ENCODE measurements at regions of chr12 and their contacts with region 1.

Region 1: GRCh38 chr12:102740141-102740955 is 176.7 kb downstream of the PAH start:
- DNase-seq: no peak
- ATAC-seq: peak; percentile 64
- H3K4me3 ChIP-seq: no peak overlapping the region
- H3K27ac ChIP-seq: no peak overlapping the region
- H3K4me1 ChIP-seq: peaks cover 1% of the 10 kb centered on the region
- H3K27me3 ChIP-seq: no peaks in the 10 kb centered on the region
- CTCF ChIP-seq: peak; percentile 17 to 64 (median 37); a peak in 3 of 6 replicates
- EP300 ChIP-seq: no peak
- POLR2A ChIP-seq: no peak
- RAD21 ChIP-seq: peak; percentile 74

Region 2: GRCh38 chr12:102095675-102096263 is 644.6 kb before region 1 on chr12:
- CTCF ChIA-PET with region 1: interaction called, 54 read pairs
- POLR2A ChIA-PET with region 1: no interaction called
- RAD21 ChIA-PET with region 1: interaction called, 6 read pairs
- SMC1A ChIA-PET with region 1: interaction called, 32 read pairs
- in situ Hi-C with region 1: loop called (anchors 10 kb)
- intact Hi-C with region 1: loop called (anchors 1 kb)
- DNase-seq: peak; percentile 4
- ATAC-seq: peak; percentile 92
- H3K4me3 ChIP-seq: no peak overlapping the region
- H3K27ac ChIP-seq: no peak overlapping the region
- H3K4me1 ChIP-seq: peaks cover 10% of the 10 kb centered on the region
- H3K27me3 ChIP-seq: no peaks in the 10 kb centered on the region
- CTCF ChIP-seq: peak; percentile 48 to 67 (median 51); a peak in 4 of 6 replicates
- EP300 ChIP-seq: no peak
- POLR2A ChIP-seq: no peak
- RAD21 ChIP-seq: peak; percentile 69

Region 3: GRCh38 chr12:102300824-102301461 is 439.4 kb before region 1 on chr12:
- CTCF ChIA-PET with region 1: interaction called, 21 read pairs
- POLR2A ChIA-PET with region 1: no interaction called
- RAD21 ChIA-PET with region 1: interaction called, 11 read pairs
- SMC1A ChIA-PET with region 1: interaction called, 24 read pairs
- in situ Hi-C with region 1: no loop called
- intact Hi-C with region 1: loop called (anchors 2 kb)
- DNase-seq: peak; percentile 61
- ATAC-seq: peak; percentile 98
- H3K4me3 ChIP-seq: no peak overlapping the region
- H3K27ac ChIP-seq: no peak overlapping the region
- H3K4me1 ChIP-seq: no peaks in the 10 kb centered on the region
- H3K27me3 ChIP-seq: no peaks in the 10 kb centered on the region
- CTCF ChIP-seq: peak; percentile 41 to 47 (median 42); a peak in 4 of 6 replicates
- EP300 ChIP-seq: no peak
- POLR2A ChIP-seq: no peak
- RAD21 ChIP-seq: peak; percentile 57

Region 4: DNA sequence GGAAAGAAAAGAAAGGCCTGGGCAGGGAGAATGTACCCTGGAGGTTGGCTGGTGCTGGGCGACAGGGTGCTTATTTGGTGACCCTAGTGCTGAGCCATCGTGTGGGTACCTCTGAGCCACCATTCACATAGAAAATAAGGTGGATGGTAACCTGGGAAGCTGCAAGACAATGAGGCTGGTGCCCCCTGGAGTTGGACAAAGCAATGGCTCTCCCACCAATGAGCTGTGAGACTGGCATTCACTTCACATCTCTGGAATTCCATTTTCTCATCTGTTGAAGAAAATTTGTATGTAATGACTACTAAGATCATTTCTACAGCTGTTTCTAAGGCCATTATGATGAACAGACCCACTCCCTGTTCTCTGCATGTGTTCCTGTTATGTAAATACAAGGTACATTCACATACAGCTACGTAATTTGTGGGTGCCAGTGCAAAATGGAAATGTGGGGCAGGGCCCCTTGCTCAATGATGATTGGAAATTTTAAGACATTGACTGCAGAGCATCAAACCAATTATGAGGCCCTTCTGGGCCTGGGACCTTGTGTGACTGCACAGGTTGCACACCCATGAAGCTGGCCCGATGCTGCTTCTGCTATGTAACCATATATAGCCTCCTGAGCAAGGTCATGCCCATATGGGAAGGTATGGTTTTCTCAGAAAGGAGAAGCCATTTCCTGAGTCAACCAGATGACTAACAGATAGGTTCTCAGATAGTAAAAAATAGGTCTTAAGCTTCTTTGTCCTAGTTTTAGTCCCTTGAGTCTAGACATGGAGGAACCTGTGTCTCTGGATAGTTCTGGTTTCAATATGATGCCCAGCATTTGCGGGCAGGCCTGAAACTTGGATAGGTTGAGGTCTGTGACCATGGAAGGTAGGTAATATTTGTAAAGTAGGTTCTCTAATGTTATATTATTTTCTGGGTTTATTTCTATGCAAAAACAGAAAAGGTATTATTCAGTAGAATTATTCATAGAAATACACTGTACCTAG is 196.6 kb before region 1 on chr12:
- CTCF ChIA-PET with region 1: interaction called, 17 read pairs
- POLR2A ChIA-PET with region 1: no interaction called
- RAD21 ChIA-PET with region 1: interaction called, 7 read pairs
- SMC1A ChIA-PET with region 1: interaction called, 12 read pairs
- in situ Hi-C with region 1: no loop called
- intact Hi-C with region 1: no loop called
- DNase-seq: no peak
- ATAC-seq: peak; percentile 80
- H3K4me3 ChIP-seq: no peak overlapping the region
- H3K27ac ChIP-seq: no peak overlapping the region
- H3K4me1 ChIP-seq: peaks cover 6% of the 10 kb centered on the region
- H3K27me3 ChIP-seq: no peaks in the 10 kb centered on the region
- CTCF ChIP-seq: peak; percentile 42 to 46 (median 45); a peak in 5 of 6 replicates
- EP300 ChIP-seq: no peak
- POLR2A ChIP-seq: no peak
- RAD21 ChIP-seq: peak; percentile 62

Region 5: DNA sequence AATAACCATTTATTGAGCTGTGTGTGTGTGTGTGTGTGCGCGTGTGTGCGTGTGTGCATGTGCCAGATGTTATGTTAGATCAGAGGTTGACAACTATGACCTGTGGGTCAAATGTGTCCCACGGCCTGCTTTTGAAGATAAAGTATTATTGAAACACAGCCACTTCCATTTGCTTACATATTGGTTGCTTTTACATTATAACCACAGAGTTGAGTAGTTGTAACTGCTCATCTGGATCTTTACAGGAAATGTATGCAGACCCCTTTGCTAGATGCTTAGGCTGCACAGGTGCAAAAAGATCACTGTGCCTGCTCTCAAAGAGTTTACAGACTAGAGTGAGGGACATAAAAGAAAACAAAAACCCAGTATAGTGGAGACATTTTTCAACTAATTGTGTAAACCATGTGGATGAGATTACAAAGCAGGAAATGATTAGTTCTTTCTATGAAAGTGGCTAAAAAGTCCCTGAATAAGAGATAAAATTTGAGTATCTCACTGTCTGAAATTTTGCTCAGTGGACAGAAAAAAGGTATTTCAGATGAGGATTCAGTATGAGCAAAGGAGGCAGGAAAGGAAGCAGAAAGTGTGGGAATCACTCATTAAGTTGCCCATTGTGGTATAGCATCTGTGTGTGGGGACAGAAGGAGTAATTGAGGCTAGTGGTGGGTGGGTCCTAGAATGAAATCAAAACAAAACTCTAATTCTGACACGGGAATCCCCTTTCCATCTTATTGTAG is 11.7 kb before region 1 on chr12:
- CTCF ChIA-PET with region 1: interaction called, 23 read pairs
- POLR2A ChIA-PET with region 1: interaction called, 3 read pairs
- RAD21 ChIA-PET with region 1: interaction called, 13 read pairs
- SMC1A ChIA-PET with region 1: interaction called, 12 read pairs
- in situ Hi-C with region 1: no loop called
- intact Hi-C with region 1: no loop called
- DNase-seq: peak; percentile 77
- ATAC-seq: peak; percentile 82
- H3K4me3 ChIP-seq: 0 out of 2 replicates have a peak overlapping the region, but pooled peaks have one; percentile 13
- H3K27ac ChIP-seq: peak overlapping the region; percentile 81
- H3K4me1 ChIP-seq: peaks cover 21% of the 10 kb centered on the region
- H3K27me3 ChIP-seq: no peaks in the 10 kb centered on the region
- CTCF ChIP-seq: no peak
- EP300 ChIP-seq: no peak
- POLR2A ChIP-seq: no peak
- RAD21 ChIP-seq: no peak

Region 6: DNA sequence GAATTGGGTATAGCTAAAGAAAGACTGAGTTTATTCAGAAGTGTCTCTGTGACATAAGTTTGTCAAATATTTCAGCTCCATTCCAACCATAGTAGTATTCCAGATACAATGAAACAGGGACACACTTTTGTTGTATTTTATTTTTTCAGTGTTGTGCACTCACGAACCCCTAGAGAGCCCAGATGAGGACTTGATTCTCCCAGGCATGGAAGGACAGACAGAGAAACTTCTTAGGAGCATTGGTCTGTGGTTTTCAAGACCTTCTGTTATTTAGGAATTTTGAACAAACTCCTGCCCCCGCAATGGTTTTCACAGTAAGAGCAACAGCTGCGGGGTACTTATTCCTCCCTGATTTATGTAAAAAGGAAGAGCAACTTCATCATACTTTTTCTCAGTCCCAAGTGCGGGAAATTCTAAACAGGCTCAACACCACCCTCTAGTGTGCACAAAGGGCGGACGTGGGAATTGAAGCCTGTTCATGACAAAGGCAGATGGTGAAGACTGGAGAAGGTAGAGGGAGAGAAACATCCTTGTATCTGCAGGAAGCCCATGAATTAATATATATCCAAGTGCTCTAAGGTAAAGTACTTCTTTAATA is 29.1 kb after region 1 on chr12:
- CTCF ChIA-PET with region 1: interaction called, 43 read pairs
- POLR2A ChIA-PET with region 1: interaction called, 3 read pairs
- RAD21 ChIA-PET with region 1: interaction called, 32 read pairs
- SMC1A ChIA-PET with region 1: interaction called, 32 read pairs
- in situ Hi-C with region 1: no loop called
- intact Hi-C with region 1: no loop called
- DNase-seq: peak; percentile 40
- ATAC-seq: peak; percentile 96
- H3K4me3 ChIP-seq: no peak overlapping the region
- H3K27ac ChIP-seq: no peak overlapping the region
- H3K4me1 ChIP-seq: no peaks in the 10 kb centered on the region
- H3K27me3 ChIP-seq: no peaks in the 10 kb centered on the region
- CTCF ChIP-seq: peak; percentile 80 to 87 (median 82)
- EP300 ChIP-seq: no peak
- POLR2A ChIP-seq: no peak
- RAD21 ChIP-seq: peak; percentile 96

Region 7: GRCh38 chr12:102869571-102869970 is 129.2 kb after region 1 on chr12:
- CTCF ChIA-PET with region 1: no interaction called
- POLR2A ChIA-PET with region 1: no interaction called
- RAD21 ChIA-PET with region 1: no interaction called
- SMC1A ChIA-PET with region 1: no interaction called
- in situ Hi-C with region 1: no loop called
- intact Hi-C with region 1: no loop called
- DNase-seq: no peak
- ATAC-seq: no peak
- H3K4me3 ChIP-seq: no peak overlapping the region
- H3K27ac ChIP-seq: no peak overlapping the region
- H3K4me1 ChIP-seq: no peaks in the 10 kb centered on the region
- H3K27me3 ChIP-seq: no peaks in the 10 kb centered on the region
- CTCF ChIP-seq: no peak
- EP300 ChIP-seq: no peak
- POLR2A ChIP-seq: no peak
- RAD21 ChIP-seq: no peak

Region 8: DNA sequence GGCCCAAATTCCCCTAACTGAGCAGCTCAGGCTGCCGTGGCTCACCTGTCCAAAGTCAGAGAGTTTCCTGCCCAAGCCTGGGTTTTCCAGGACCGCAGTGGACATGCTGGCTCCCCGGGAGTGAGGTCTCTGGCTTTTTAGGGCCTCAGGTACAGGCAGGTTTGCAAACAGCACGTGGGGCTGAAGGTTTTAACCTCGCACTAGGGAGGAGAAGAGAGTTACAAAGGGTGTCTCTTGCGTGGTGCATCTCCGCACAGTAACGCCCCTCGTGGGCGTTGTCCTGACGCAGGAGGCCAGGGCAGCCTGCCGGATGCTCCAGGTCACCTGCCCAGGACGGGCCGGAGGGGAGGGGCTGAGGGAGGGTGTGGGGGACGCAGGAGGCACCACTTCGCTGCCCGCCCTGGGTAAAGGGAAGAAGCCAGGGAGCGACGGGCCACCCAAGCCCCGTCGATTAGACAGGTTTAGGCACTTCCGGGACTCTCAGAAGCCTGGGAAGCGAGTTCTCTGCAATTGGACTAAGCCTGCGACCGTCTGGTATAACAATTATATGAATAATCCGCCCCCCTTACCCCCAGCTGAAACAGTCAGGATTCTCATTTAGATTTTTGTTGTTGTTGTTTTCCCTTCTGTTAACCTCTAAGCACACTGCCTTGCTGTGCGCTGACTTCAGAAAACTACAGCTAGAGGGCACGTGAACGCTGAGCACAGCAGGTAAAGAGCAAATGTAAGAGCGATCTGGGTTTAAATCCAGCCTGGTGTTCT is 176.9 kb after region 1 on chr12 and contains the start of gene PAH:
- CTCF ChIA-PET with region 1: no interaction called
- POLR2A ChIA-PET with region 1: no interaction called
- RAD21 ChIA-PET with region 1: no interaction called
- SMC1A ChIA-PET with region 1: no interaction called
- in situ Hi-C with region 1: no loop called
- intact Hi-C with region 1: no loop called
- DNase-seq: no peak
- ATAC-seq: peak; percentile 85
- H3K4me3 ChIP-seq: peak within 1 kb of the TSS; percentile 40
- H3K27ac ChIP-seq: no peak within 1 kb of the TSS
- H3K4me1 ChIP-seq: peaks cover 14% of the 10 kb centered on the region
- H3K27me3 ChIP-seq: no peaks in the 10 kb centered on the region
- CTCF ChIP-seq: peak; percentile 14 to 27 (median 20); a peak in 3 of 6 replicates
- EP300 ChIP-seq: no peak
- POLR2A ChIP-seq: no peak
- RAD21 ChIP-seq: peak; percentile 18; the same call in 1 of the 2 replicates
- polyA plus RNA-seq, gene PAH: 0.20 to 0.31 TPM

Measured in GM12878 (cell line).